Naive thymus-derived CD4-positive, alpha-beta T cell (primary cell): ENCODE measurements at regions of chr1 and their contacts with region 1.

Region 1: DNA sequence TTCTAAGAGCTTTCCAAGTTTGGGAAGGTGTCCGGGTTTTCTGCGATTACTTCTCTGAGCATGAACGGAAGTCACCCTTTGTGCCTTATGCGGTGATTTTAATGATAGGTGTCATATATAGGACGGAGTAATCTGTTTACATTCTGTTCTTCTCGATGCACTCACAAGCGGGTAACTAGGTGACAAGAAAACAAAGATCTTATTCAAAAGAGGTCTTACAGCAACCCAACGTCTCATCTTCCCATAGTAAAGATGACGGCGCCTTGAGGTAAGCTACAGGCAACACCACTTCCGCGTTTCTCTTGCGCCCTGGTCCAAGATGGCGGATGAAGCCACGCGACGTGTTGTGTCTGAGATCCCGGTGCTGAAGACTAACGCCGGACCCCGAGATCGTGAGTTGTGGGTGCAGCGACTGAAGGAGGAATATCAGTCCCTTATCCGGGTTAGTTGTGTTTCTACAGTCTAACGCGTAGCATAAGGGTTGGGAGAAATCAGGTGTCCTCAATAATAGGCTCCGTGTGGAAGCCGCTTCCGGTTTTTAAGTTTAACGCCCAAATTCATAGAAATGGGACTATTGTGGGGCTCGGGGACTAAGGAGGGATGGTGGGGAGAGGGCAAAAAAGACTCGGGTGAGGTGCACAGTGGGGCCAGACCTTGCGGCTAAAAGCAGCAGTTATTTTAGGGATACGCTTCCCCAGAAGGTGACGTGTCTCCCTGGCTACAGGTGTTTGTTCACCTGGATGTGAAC is at the start of gene UFC1:
- DNase-seq: peak; percentile 72 to 92 (median 87)
- ATAC-seq: peak; percentile 94
- H3K4me3 ChIP-seq: peak within 1 kb of the TSS; percentile 86
- H3K4me3 Mint-ChIP-seq: peak within 1 kb of the TSS; percentile 93 to 100 (median 100)
- H3K27ac ChIP-seq: peak within 1 kb of the TSS; percentile 88
- H3K27ac Mint-ChIP-seq: peak within 1 kb of the TSS; percentile 100
- H3K4me1 ChIP-seq: peaks cover 13 to 20% of the 10 kb centered on the region in 2 donors
- H3K4me1 Mint-ChIP-seq: peaks cover 7 to 39% (median 35%) of the 10 kb centered on the region in 7 donors
- H3K27me3 ChIP-seq: no peaks in the 10 kb centered on the region
- H3K27me3 Mint-ChIP-seq: no peaks in the 10 kb centered on the region
- total RNA-seq, gene UFC1: 83.7 to 116 (median 98.9) TPM

Region 2: DNA sequence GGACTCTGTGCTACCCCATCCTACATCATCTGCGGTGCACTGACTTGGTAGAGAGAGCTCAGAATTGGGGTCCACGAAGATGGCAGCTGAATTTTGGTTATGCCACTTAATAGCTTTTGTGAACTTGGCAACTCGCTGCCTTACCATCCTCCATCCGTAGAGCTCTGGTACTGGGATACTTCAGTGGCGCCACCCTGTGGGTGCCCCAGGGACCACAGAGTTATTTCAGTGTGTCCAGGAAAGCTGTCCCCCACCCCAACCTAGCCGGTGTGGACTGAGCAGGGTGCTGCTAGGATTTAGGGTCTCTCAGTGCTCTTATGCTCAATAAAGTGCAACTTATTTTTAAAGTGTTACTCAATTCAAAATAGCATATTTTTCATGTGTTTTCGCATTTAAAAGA is 99.0 kb before region 1 on chr1:
- CTCF ChIA-PET with region 1: no interaction called
- POLR2A ChIA-PET with region 1: interaction called, 10 read pairs
- intact Hi-C with region 1: no loop called
- DNase-seq: no peak
- ATAC-seq: no peak
- H3K4me3 ChIP-seq: no peak overlapping the region
- H3K4me3 Mint-ChIP-seq: no peak overlapping the region
- H3K27ac ChIP-seq: peak overlapping the region; percentile 19
- H3K27ac Mint-ChIP-seq: peak overlapping the region in 3 of 9 donors; percentile 25 to 39 (median 26)
- H3K4me1 ChIP-seq: peaks cover 5 to 8% of the 10 kb centered on the region in 2 donors
- H3K4me1 Mint-ChIP-seq: peaks cover 20 to 40% (median 36%) of the 10 kb centered on the region in 7 donors
- H3K27me3 ChIP-seq: no peaks in the 10 kb centered on the region
- H3K27me3 Mint-ChIP-seq: no peaks in the 10 kb centered on the region

Region 3: GRCh38 chr1:161117759-161118581 is 35.9 kb before region 1 on chr1 and contains the starts of genes NIT1 and PFDN2:
- CTCF ChIA-PET with region 1: no interaction called
- POLR2A ChIA-PET with region 1: interaction called, 15 read pairs
- intact Hi-C with region 1: loop called (anchors 1 kb)
- DNase-seq: peak; percentile 76 to 90 (median 85)
- ATAC-seq: peak; percentile 86
- H3K4me3 ChIP-seq: peak within 1 kb of the TSS; percentile 99
- H3K4me3 Mint-ChIP-seq: peak within 1 kb of the TSS; percentile 92 to 99 (median 95)
- H3K27ac ChIP-seq: peak within 1 kb of the TSS; percentile 92
- H3K27ac Mint-ChIP-seq: peak within 1 kb of the TSS; percentile 57 to 99 (median 93)
- H3K4me1 ChIP-seq: peaks cover 31 to 35% of the 10 kb centered on the region in 2 donors
- H3K4me1 Mint-ChIP-seq: peaks cover 44 to 82% (median 78%) of the 10 kb centered on the region in 7 donors
- H3K27me3 ChIP-seq: no peaks in the 10 kb centered on the region
- H3K27me3 Mint-ChIP-seq: no peaks in the 10 kb centered on the region
- total RNA-seq, gene NIT1: 23.3 to 49.6 (median 41.8) TPM
- total RNA-seq, gene PFDN2: 32.0 to 67.9 (median 34.0) TPM

Region 4: GRCh38 chr1:161177112-161177935 is 23.5 kb after region 1 on chr1 and contains the start of gene B4GALT3:
- CTCF ChIA-PET with region 1: interaction called, 3 read pairs
- POLR2A ChIA-PET with region 1: interaction called, 28 read pairs
- intact Hi-C with region 1: loop called in 1 of 2 experiments (anchors 1 kb)
- DNase-seq: peak; percentile 87 to 99 (median 92)
- ATAC-seq: peak; percentile 96
- H3K4me3 ChIP-seq: peak within 1 kb of the TSS; percentile 93
- H3K4me3 Mint-ChIP-seq: peak within 1 kb of the TSS; percentile 94 to 100 (median 98)
- H3K27ac ChIP-seq: peak within 1 kb of the TSS; percentile 93
- H3K27ac Mint-ChIP-seq: peak within 1 kb of the TSS; percentile 94 to 100 (median 97)
- H3K4me1 ChIP-seq: peaks cover 36 to 39% of the 10 kb centered on the region in 2 donors
- H3K4me1 Mint-ChIP-seq: peaks cover 54 to 87% (median 74%) of the 10 kb centered on the region in 7 donors
- H3K27me3 ChIP-seq: no peaks in the 10 kb centered on the region
- H3K27me3 Mint-ChIP-seq: no peaks in the 10 kb centered on the region
- total RNA-seq, gene B4GALT3: 40.5 to 83.7 (median 54.3) TPM

Region 5: DNA sequence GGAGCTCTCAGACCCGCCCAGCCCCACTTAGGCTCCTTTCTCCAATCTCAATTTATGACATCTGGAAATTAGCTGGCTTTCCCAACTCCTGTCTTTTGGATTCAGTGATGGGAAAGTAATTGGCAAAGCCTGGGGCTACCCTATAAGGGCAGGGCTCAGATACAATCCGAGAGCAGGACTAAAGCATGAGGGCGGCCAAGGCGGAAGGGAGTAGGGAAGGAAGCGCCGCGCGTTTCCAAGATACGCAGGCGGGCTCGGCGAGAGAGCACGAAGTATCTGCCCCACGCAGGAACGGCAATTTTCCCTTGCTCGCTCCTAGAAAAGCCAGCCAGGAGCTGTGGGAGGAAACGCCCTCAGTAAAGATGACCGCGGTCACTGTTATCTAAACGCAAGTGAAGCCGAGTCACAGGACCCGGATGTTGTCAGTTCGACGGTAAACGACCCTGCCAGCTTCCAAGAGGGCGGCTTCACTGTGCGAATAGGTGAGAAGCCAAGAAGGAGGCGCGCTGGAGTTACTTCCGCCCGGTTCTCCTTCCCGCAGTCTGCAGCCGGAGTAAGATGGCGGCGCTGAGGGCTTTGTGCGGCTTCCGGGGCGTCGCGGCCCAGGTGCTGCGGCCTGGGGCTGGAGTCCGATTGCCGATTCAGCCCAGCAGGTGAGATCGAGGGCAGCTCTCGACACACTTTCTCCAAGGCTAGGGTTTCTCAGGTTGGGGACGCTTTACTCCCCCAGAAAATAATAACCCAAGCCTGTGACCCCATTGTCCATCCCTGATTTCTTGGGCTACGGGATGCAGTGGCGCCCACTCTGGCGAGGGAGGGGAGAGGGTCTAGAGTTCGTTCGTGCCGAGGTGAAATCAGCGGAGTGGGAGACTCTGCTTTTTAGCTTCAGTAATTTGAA is 48.2 kb after region 1 on chr1 and contains the start of gene NDUFS2:
- CTCF ChIA-PET with region 1: interaction called, 4 read pairs
- POLR2A ChIA-PET with region 1: interaction called, 30 read pairs
- intact Hi-C with region 1: loop called (anchors 1 kb)
- DNase-seq: peak; percentile 71 to 98 (median 92)
- ATAC-seq: peak; percentile 99
- H3K4me3 ChIP-seq: peak within 1 kb of the TSS; percentile 78
- H3K4me3 Mint-ChIP-seq: peak within 1 kb of the TSS; percentile 90 to 98 (median 95)
- H3K27ac ChIP-seq: peak within 1 kb of the TSS; percentile 97
- H3K27ac Mint-ChIP-seq: peak within 1 kb of the TSS; percentile 96 to 99 (median 98)
- H3K4me1 ChIP-seq: peaks cover 35 to 60% of the 10 kb centered on the region in 2 donors
- H3K4me1 Mint-ChIP-seq: peaks cover 36 to 83% (median 66%) of the 10 kb centered on the region in 7 donors
- H3K27me3 ChIP-seq: no peaks in the 10 kb centered on the region
- H3K27me3 Mint-ChIP-seq: no peaks in the 10 kb centered on the region
- total RNA-seq, gene NDUFS2: 64.1 to 131 (median 85.3) TPM